WTC11 (cell line): ENCODE measurements at regions of chr1 and their contacts with region 1.

Region 1: GRCh38 chr1:231757101-231757404 is 130.5 kb downstream of the DISC1 start:
- DNase-seq: no peak
- ATAC-seq: no peak
- H3K4me3 Mint-ChIP-seq: no peak overlapping the region
- H3K27ac Mint-ChIP-seq: no peak overlapping the region
- H3K4me1 Mint-ChIP-seq: no peaks in the 10 kb centered on the region
- H3K27me3 Mint-ChIP-seq: peaks cover 2% of the 10 kb centered on the region; the same call in 1 of the 2 replicates
- CTCF ChIP-seq: peak; percentile 15; the same call in 1 of the 2 replicates

Region 2: GRCh38 chr1:231724876-231725724 is 32.0 kb before region 1 on chr1:
- CTCF ChIA-PET with region 1: interaction called, 16 read pairs
- POLR2A ChIA-PET with region 1: no interaction called
- DNase-seq: peak; percentile 70
- ATAC-seq: peak; percentile 99
- H3K4me3 Mint-ChIP-seq: no peak overlapping the region
- H3K27ac Mint-ChIP-seq: no peak overlapping the region
- H3K4me1 Mint-ChIP-seq: no peaks in the 10 kb centered on the region
- H3K27me3 Mint-ChIP-seq: no peaks in the 10 kb centered on the region
- CTCF ChIP-seq: peak; percentile 57; the same call in 1 of the 2 replicates

Region 3: DNA sequence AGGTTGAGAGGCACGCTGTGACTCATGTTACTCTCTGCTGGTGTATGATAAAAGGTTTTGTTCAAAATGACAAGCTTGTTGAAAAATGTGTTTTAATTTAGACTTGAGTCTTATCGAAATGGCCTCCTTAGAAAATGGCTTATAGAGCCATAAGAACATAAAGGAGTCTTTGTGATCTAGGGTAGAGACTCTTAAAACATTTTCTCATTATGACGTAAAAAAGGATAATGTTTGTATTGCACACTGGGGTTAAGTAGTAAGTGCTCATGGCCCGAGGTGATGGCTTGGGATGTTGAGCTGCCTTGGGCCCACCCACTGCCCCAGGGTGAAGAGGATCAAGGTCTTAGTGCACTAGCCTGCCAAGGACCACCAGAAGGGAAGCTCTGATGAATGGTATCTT is 13.1 kb before region 1 on chr1:
- CTCF ChIA-PET with region 1: interaction called, 25 read pairs
- POLR2A ChIA-PET with region 1: no interaction called
- DNase-seq: no peak
- ATAC-seq: no peak
- H3K4me3 Mint-ChIP-seq: no peak overlapping the region
- H3K27ac Mint-ChIP-seq: no peak overlapping the region
- H3K4me1 Mint-ChIP-seq: no peaks in the 10 kb centered on the region
- H3K27me3 Mint-ChIP-seq: peaks cover 11% of the 10 kb centered on the region
- CTCF ChIP-seq: no peak

Region 4: GRCh38 chr1:231776010-231776756 is 19.1 kb after region 1 on chr1:
- CTCF ChIA-PET with region 1: interaction called, 16 read pairs
- POLR2A ChIA-PET with region 1: no interaction called
- DNase-seq: no peak
- ATAC-seq: no peak
- H3K4me3 Mint-ChIP-seq: no peak overlapping the region
- H3K27ac Mint-ChIP-seq: no peak overlapping the region
- H3K4me1 Mint-ChIP-seq: peaks cover under 1% of the 10 kb centered on the region; the same call in 1 of the 2 replicates
- H3K27me3 Mint-ChIP-seq: no peaks in the 10 kb centered on the region
- CTCF ChIP-seq: no peak

Region 5: DNA sequence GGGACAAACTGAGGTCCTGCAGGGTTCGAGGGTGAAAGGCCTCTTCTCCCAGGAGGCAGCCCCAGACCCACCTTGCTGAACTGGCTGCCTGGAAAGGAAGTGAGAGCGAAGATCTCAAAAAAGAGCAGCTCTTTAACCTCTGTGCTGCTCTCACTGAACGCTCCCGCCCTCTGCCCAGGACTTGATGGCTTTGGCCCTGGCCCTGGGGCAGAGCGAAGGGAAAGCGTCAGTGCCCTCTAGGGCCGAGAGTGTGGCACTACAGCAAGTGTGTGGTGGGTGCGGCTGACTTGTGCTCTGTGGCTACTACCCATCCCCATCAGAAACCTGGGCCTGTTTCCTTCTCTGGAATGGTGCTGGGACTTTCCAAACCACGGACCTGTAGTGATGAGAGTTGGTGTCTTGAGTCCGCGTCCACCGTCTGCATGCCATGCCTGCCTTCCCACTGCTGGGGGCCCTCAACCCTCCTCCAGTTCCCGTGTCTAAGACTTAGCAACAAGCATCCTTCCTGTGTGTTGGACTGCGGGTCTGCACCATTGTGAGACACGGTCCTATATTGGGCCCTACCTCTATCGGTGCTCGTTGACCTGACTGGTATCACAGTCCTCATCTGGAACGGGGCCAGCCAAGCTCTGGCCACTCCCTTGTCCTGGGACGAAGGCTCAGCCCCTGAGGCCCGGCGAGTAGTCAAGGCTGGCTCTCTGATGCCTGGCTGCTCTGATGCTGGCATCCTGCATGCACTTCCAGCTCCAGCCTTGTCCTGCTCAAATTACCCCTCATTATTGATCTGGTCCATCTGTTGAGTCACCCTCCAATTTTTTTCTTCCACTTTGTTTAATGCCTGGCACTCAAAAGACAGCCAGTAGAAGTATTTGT is 49.8 kb after region 1 on chr1:
- CTCF ChIA-PET with region 1: interaction called, 38 read pairs
- POLR2A ChIA-PET with region 1: no interaction called
- DNase-seq: peak; percentile 86
- ATAC-seq: peak; percentile 100
- H3K4me3 Mint-ChIP-seq: no peak overlapping the region
- H3K27ac Mint-ChIP-seq: no peak overlapping the region
- H3K4me1 Mint-ChIP-seq: no peaks in the 10 kb centered on the region
- H3K27me3 Mint-ChIP-seq: no peaks in the 10 kb centered on the region; the same call in 1 of the 2 replicates
- CTCF ChIP-seq: peak; percentile 67; the same call in 1 of the 2 replicates